ENCODE measurements at regions of chr16 and their contacts with region 1.

Region 1: GRCh38 chr16:85717393-85718121 is 28.8 kb upstream of the GINS2 start:
- DNase-seq: peak; percentile 59 to 75 (median 68)
- H3K4me3 ChIP-seq: no peak overlapping the region
- H3K4me3 Mint-ChIP-seq: no peak overlapping the region
- H3K27ac ChIP-seq: no peak overlapping the region
- H3K27ac Mint-ChIP-seq: no peak overlapping the region
- H3K4me1 ChIP-seq: peaks cover 17 to 26% of the 10 kb centered on the region in 2 donors
- H3K4me1 Mint-ChIP-seq: peaks cover 16% of the 10 kb centered on the region
- H3K27me3 ChIP-seq: no peaks in the 10 kb centered on the region
- H3K27me3 Mint-ChIP-seq: peaks cover 0 to 12% (median 7%) of the 10 kb centered on the region in 3 donors
- CTCF ChIP-seq: peak; percentile 86

Region 2: DNA sequence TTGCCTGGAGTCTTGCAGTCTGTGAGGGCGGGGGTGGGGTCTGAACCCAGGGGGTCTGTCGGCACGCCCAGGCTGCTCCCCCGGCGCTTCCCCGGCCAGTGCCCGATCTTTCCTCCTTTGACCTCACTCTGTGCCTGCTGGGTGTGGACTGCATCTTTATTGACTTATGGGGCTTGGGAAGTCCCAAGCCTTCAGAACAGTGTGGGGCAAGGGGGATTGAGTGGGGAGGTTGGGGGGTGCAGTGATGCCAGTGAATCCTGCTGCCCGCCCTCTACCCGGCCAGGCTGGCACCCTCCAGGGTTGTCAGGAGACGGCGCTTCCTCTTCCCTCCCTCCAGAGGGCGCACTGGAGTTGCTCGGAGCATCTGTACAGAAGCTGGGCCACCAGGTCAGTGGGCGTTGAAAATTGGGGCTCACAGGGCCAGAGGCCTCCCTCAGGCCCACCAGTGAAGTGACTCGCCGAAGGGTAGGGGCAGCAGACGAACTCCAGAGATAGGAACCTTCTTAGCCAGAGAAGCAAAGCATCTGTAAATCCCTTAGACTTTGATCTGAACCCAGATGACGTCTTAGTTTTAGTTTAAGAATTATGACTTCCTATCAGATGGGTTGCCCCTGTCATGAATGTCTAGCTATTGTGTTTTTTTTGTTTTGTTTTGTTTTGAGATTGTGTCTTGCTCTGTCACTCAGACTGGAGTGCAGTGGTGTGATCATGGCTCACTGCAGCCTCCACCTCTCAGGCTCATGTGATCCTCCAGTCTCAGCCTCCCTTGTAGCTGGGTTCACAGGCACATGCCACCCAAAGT is 420.5 kb before region 1 on chr16:
- intact Hi-C with region 1: loop called in 1 of 2 experiments (anchors 10 kb)
- DNase-seq: peak; percentile 47 to 61 (median 49)
- H3K4me3 ChIP-seq: no peak overlapping the region
- H3K4me3 Mint-ChIP-seq: peak overlapping the region; percentile 37 to 53
- H3K27ac ChIP-seq: no peak overlapping the region
- H3K27ac Mint-ChIP-seq: peak overlapping the region in 1 of 7 donors; percentile 6
- H3K4me1 ChIP-seq: peaks cover under 1 to 4% of the 10 kb centered on the region in 2 donors
- H3K4me1 Mint-ChIP-seq: peaks cover 9% of the 10 kb centered on the region
- H3K27me3 ChIP-seq: no peaks in the 10 kb centered on the region
- H3K27me3 Mint-ChIP-seq: peaks cover 2 to 10% (median 4%) of the 10 kb centered on the region in 3 donors
- CTCF ChIP-seq: peak; percentile 94

Region 3: GRCh38 chr16:85759631-85760419 is 42.3 kb after region 1 on chr16:
- intact Hi-C with region 1: loop called (anchors 2 to 5 kb)
- DNase-seq: peak; percentile 28 to 44 (median 38)
- H3K4me3 ChIP-seq: peak overlapping the region in 2 of 3 experiments; percentile 25 to 71
- H3K4me3 Mint-ChIP-seq: peak overlapping the region; percentile 56 to 85
- H3K27ac ChIP-seq: peak overlapping the region; percentile 45 to 73
- H3K27ac Mint-ChIP-seq: peak overlapping the region; percentile 37 to 90 (median 83)
- H3K4me1 ChIP-seq: peaks cover 51 to 69% of the 10 kb centered on the region in 2 donors
- H3K4me1 Mint-ChIP-seq: peaks cover 58% of the 10 kb centered on the region
- H3K27me3 ChIP-seq: no peaks in the 10 kb centered on the region
- H3K27me3 Mint-ChIP-seq: peaks cover 5 to 10% (median 8%) of the 10 kb centered on the region in 3 donors
- CTCF ChIP-seq: peak; percentile 26

Region 4: GRCh38 chr16:85765211-85765610 is 47.7 kb after region 1 on chr16:
- intact Hi-C with region 1: loop called in 1 of 2 experiments (anchors 2 kb)
- DNase-seq: no peak
- H3K4me3 ChIP-seq: no peak overlapping the region
- H3K4me3 Mint-ChIP-seq: no peak overlapping the region
- H3K27ac ChIP-seq: no peak overlapping the region
- H3K27ac Mint-ChIP-seq: no peak overlapping the region
- H3K4me1 ChIP-seq: peaks cover 42 to 52% of the 10 kb centered on the region in 2 donors
- H3K4me1 Mint-ChIP-seq: peaks cover 49% of the 10 kb centered on the region
- H3K27me3 ChIP-seq: no peaks in the 10 kb centered on the region
- H3K27me3 Mint-ChIP-seq: peaks cover 8 to 14% (median 8%) of the 10 kb centered on the region in 3 donors
- CTCF ChIP-seq: no peak

Region 5: GRCh38 chr16:86214326-86215232 is 497.0 kb after region 1 on chr16:
- intact Hi-C with region 1: no loop called
- DNase-seq: no peak
- H3K4me3 ChIP-seq: no peak overlapping the region
- H3K4me3 Mint-ChIP-seq: no peak overlapping the region
- H3K27ac ChIP-seq: no peak overlapping the region
- H3K27ac Mint-ChIP-seq: no peak overlapping the region
- H3K4me1 ChIP-seq: no peaks in the 10 kb centered on the region
- H3K4me1 Mint-ChIP-seq: peaks cover 12% of the 10 kb centered on the region
- H3K27me3 ChIP-seq: peaks cover 0 to 3% of the 10 kb centered on the region in 2 donors
- H3K27me3 Mint-ChIP-seq: peaks cover 3 to 6% (median 6%) of the 10 kb centered on the region in 3 donors
- CTCF ChIP-seq: no peak

Measured in CD14-positive monocyte (primary cell).